Lower leg skin (tissue), 4 donors: ENCODE measurements at regions of chr12 and their contacts with region 1.

Region 1: GRCh38 chr12:2034633-2035430 is 18.0 kb upstream of the CACNA1C start:
- DNase-seq: peak; percentile 60 to 96
- H3K4me3 ChIP-seq: no peak overlapping the region
- CTCF ChIP-seq: no peak
- POLR2A ChIP-seq: no peak

Region 2: DNA sequence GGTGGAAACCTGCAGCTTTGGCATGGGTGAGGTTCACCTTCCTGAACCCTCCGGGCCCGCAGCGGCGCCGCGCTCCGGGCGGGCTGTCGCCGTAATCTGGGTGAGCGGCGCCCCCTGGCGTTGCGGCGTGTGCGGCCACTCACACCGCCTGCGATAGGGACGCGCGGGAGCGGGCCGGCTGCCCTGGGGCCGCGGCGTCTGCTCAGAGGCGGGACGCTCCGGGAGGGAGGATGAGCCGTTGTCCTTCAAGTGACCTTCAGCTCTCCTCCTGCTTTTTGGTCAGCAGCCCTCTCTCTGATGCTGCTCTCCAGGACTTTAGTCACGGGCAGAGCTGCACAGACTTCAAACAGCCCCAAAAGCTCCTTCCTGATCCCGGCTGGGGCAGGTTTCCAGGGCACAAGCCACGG is 548.3 kb after region 1 on chr12:
- intact Hi-C with region 1: loop called (anchors 10 kb)
- DNase-seq: peak in 1 of 2 donors; percentile 90
- H3K4me3 ChIP-seq: no peak overlapping the region
- CTCF ChIP-seq: peak in 1 of 3 donors; percentile 43
- POLR2A ChIP-seq: no peak